ENCODE measurements at regions of chr1 and their contacts with region 1.

Region 1: GRCh38 chr1:16366722-16367257 is at the start of gene SZRD1:
- DNase-seq: peak; percentile 98
- ATAC-seq: peak; percentile 91
- H3K4me3 Mint-ChIP-seq: peak within 1 kb of the TSS; percentile 95
- H3K27ac Mint-ChIP-seq: peak within 1 kb of the TSS; percentile 99
- H3K4me1 Mint-ChIP-seq: peaks cover 32% of the 10 kb centered on the region
- H3K27me3 Mint-ChIP-seq: no peaks in the 10 kb centered on the region
- total RNA-seq, gene SZRD1: 184 to 238 TPM

Region 2: GRCh38 chr1:15847100-15847892 is 519.5 kb before region 1 on chr1 and contains the start of gene SPEN:
- CTCF ChIA-PET with region 1: no interaction called
- POLR2A ChIA-PET with region 1: no interaction called
- intact Hi-C with region 1: loop called in 1 of 2 experiments (anchors 1 kb)
- DNase-seq: peak; percentile 99
- ATAC-seq: peak; percentile 88
- H3K4me3 Mint-ChIP-seq: peak within 1 kb of the TSS; percentile 91
- H3K27ac Mint-ChIP-seq: peak within 1 kb of the TSS; percentile 94
- H3K4me1 Mint-ChIP-seq: peaks cover 47% of the 10 kb centered on the region
- H3K27me3 Mint-ChIP-seq: no peaks in the 10 kb centered on the region
- total RNA-seq, gene SPEN: 43.2 to 52.7 TPM

Region 3: GRCh38 chr1:16206547-16207317 is 160.1 kb before region 1 on chr1:
- CTCF ChIA-PET with region 1: no interaction called
- POLR2A ChIA-PET with region 1: interaction called, 9 read pairs
- intact Hi-C with region 1: loop called (anchors 1 kb)
- DNase-seq: peak; percentile 97
- ATAC-seq: peak; percentile 94
- H3K4me3 Mint-ChIP-seq: peak overlapping the region; percentile 72
- H3K27ac Mint-ChIP-seq: peak overlapping the region; percentile 90
- H3K4me1 Mint-ChIP-seq: peaks cover 9% of the 10 kb centered on the region
- H3K27me3 Mint-ChIP-seq: no peaks in the 10 kb centered on the region

Region 4: DNA sequence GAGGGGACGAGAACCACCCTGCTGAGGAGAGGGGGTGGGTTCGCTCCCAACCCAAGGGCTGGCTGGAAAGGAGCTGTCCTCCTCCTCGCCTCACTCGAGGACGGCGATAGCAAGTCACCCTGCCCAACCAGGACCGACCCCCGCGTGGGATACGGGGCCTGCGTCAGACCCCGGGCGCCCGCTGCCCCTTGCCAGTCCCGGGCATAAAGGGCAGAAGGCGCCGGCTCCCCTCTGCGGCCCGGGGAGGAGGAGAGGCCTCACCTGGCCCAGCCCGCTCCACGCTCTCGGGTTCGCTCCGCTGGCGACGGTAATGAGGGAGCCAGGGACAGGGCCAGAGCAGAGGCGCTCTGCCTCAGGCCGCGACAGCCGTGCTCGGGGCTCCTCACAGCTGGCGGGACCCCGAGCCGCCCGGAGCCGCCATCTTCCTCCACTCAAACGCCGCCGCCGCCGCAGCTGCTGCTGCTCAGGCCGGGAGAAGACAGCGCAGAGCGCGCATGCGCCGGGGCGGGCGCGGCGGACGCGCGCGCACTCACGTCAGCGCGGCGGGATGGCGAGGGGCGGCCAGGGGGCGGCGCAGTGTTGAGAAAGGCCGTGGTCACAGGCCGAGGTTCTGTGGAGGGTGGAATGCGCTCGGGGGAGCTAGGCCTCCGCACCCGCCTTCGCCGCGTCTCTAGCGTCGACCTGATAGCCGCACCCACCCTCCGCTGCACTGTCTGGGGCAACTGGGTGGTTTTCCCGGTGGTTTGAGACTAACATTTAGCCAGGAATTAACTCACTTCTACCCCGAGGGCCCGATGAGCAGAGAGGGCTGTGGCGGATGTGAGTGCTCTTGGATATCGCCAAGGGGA is 14.6 kb before region 1 on chr1 and contains the start of gene FBXO42:
- CTCF ChIA-PET with region 1: interaction called, 76 read pairs
- POLR2A ChIA-PET with region 1: interaction called, 9 read pairs
- intact Hi-C with region 1: loop called (anchors 1 kb)
- DNase-seq: peak; percentile 95
- ATAC-seq: peak; percentile 92
- H3K4me3 Mint-ChIP-seq: peak within 1 kb of the TSS; percentile 96
- H3K27ac Mint-ChIP-seq: peak within 1 kb of the TSS; percentile 96
- H3K4me1 Mint-ChIP-seq: peaks cover 31% of the 10 kb centered on the region
- H3K27me3 Mint-ChIP-seq: no peaks in the 10 kb centered on the region
- total RNA-seq, gene FBXO42: 14.3 to 18.1 TPM

Region 5: DNA sequence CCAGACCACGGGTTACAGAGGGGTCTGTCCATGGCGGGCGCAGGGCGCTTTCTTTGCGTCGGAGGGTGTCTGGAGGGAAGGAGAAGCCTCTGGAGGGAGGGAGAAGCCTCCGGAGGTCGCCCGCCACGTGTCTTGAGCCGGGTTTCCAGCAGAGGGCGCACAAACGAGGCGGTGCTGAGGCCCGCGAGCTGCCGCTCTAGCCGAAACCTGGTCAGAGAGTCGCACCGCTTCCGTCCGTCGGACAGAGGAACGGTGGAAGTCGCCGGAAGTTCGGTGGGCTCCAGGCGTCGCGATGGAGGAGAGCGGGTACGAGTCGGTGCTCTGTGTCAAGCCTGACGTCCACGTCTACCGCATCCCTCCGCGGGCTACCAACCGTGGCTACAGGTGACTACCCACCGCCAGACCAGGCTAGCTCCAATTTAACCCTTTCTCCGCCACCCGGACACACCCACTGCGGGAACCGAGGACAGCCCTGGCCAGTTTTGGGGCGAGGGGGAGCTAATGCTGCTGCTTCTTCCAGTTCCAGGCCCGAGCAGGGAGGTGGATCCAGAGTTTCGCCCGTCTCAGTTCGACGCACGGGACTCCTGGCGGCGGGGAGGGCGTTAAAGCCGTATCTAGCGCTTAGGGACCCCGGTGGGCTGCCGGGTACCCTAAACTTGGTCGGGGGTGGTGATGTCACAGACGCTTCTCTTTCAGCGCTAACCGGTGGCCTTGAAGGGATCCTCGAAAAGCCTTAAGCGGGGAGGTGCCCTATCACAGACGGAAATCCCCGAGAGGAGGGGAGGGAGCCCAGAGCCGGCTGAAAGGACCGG is 73.9 kb after region 1 on chr1 and contains the start of gene NECAP2:
- CTCF ChIA-PET with region 1: interaction called, 7 read pairs
- POLR2A ChIA-PET with region 1: interaction called, 4 read pairs
- intact Hi-C with region 1: loop called (anchors 1 kb)
- DNase-seq: peak; percentile 97
- ATAC-seq: peak; percentile 91
- H3K4me3 Mint-ChIP-seq: peak within 1 kb of the TSS; percentile 81
- H3K27ac Mint-ChIP-seq: peak within 1 kb of the TSS; percentile 96
- H3K4me1 Mint-ChIP-seq: peaks cover 36% of the 10 kb centered on the region
- H3K27me3 Mint-ChIP-seq: no peaks in the 10 kb centered on the region
- total RNA-seq, gene NECAP2: 46.5 to 54.2 TPM

Region 6: DNA sequence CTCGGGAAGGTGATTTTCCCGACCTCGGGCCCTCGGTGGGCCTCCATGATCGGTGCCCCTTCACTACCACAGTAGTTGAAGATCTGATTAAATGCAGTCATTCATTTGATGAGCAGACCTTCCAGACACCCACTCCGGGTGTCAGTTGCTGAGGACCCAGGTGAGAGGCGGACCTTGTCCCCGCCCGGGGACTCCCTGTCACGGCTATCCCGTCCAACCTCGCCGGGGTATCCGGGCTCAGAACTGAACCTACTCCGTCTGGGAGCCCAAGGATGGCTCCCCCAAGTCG is 277.3 kb after region 1 on chr1:
- CTCF ChIA-PET with region 1: no interaction called
- POLR2A ChIA-PET with region 1: no interaction called
- intact Hi-C with region 1: loop called in 1 of 2 experiments (anchors 1 kb)
- DNase-seq: no peak
- ATAC-seq: peak; percentile 47
- H3K4me3 Mint-ChIP-seq: no peak overlapping the region
- H3K27ac Mint-ChIP-seq: no peak overlapping the region
- H3K4me1 Mint-ChIP-seq: peaks cover 3% of the 10 kb centered on the region
- H3K27me3 Mint-ChIP-seq: no peaks in the 10 kb centered on the region